ENCODE measurements at regions of chr19 and their contacts with region 1.

Region 1: DNA sequence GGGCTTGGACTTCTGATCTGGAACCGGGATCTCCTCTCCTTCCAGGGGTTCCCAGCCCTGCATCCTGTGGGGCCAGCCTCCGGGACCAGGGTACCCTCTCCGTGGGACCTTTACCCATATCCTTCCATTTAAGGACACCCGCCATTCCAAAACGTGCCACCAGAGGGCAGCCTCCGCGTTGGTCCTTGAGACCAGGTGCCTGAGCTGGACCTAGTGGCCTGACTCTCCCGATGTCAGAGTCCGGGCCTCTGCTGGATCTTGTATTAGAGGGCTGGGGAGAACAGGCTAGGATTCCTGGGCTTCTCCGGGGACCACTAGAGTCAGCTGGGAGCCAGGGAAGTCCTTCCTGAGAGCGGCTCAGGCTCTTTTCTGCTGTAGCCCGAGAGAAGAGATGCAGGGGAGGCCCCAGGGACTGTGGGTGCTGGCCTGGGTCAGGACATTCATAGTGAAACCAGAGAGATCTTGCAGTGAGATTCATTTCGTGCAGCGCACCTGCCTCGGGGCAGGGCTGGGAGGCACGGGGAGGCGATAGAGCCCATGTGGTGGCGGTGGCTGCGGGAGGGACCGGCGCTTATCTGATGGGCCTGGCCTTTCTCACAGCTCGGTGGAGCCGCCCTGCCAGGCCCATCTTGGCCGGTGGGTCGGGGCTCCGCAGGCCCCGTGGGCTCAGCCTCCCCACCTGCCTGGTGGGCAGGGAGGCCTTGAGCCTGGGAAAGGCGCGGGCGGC is 9.8 kb upstream of the SLC7A10 start:
- ATAC-seq: peak; percentile 71 to 92 (median 78)
- H3K4me3 ChIP-seq: no peak overlapping the region
- H3K27ac ChIP-seq: no peak overlapping the region
- H3K4me1 ChIP-seq: no peaks in the 10 kb centered on the region

Region 2: GRCh38 chr19:33406521-33407139 is 171.2 kb after region 1 on chr19:
- in situ Hi-C with region 1: loop called in 8 of 9 experiments (anchors 10 to 25 kb)
- ATAC-seq: peak; percentile 45 to 82 (median 80)
- H3K4me3 ChIP-seq: no peak overlapping the region
- H3K27ac ChIP-seq: no peak overlapping the region
- H3K4me1 ChIP-seq: peaks cover 0 to 3% of the 10 kb centered on the region in 2 donors

Region 3: GRCh38 chr19:33416307-33417215 is 181.1 kb after region 1 on chr19:
- in situ Hi-C with region 1: loop called in 4 of 9 experiments (anchors 10 to 25 kb)
- ATAC-seq: peak; percentile 56 to 94 (median 86)
- H3K4me3 ChIP-seq: no peak overlapping the region
- H3K27ac ChIP-seq: peak overlapping the region; percentile 46 to 74
- H3K4me1 ChIP-seq: peaks cover 22 to 50% of the 10 kb centered on the region in 2 donors

Region 4: DNA sequence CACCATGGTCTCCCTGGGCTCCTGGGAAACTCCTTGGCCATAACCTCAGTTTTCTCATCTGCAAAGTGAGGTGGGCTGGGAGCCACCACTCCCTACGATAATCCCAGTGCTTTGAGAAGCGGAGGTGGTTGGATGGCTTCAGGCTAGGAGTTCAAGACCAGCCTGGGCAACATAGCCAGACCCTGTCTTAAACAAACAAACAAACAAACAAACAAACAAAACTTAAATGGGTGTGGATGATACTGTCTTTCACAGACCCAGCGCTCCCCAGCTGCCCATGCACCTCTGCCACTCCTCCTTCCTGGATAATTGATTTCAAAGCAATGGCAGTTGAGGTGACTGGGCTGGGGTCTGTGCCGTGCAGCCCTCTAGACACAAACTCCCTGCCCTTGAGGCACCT is 345.7 kb after region 1 on chr19:
- in situ Hi-C with region 1: no loop called
- ATAC-seq: no peak
- H3K4me3 ChIP-seq: no peak overlapping the region
- H3K27ac ChIP-seq: no peak overlapping the region
- H3K4me1 ChIP-seq: peaks cover 35 to 47% of the 10 kb centered on the region in 2 donors

Region 5: DNA sequence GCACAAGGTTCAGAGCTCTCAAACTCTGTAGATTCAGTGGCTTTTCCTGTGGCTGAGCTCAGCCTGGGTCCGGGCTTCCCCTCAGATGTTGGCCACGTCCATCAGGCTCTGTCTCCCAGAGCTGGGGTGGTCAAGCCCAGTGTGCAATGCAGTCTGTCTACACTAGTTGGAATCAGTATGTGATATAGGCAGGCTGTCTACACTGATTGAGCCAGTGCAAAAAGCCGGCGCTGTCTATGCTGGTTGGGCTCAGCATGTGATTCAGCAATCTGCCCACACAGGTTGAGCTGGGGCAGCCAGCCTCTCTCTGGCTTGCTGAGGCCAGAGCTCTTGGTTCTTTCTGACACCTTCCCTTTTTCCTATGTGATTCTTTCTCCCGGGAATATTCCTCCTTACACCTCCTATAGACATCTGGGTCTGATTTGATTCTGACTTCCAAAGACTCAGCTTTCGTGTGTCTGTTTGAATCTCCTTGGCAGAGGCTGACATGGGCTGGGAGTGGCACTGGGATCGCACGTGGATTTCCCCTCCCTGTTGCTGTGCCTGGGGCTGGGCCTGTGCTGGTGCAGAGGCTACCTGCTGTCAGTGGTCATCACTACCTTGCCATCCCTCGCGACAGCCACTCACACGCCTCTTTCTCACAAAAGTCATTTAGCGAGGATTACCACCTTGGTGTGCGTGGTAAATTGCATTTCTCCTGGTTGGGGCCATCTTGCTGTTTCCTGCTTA is 395.6 kb after region 1 on chr19:
- in situ Hi-C with region 1: no loop called
- ATAC-seq: peak; percentile 31 to 76 (median 45)
- H3K4me3 ChIP-seq: no peak overlapping the region
- H3K27ac ChIP-seq: no peak overlapping the region
- H3K4me1 ChIP-seq: peaks cover 10% of the 10 kb centered on the region in 2 donors

Region 6: DNA sequence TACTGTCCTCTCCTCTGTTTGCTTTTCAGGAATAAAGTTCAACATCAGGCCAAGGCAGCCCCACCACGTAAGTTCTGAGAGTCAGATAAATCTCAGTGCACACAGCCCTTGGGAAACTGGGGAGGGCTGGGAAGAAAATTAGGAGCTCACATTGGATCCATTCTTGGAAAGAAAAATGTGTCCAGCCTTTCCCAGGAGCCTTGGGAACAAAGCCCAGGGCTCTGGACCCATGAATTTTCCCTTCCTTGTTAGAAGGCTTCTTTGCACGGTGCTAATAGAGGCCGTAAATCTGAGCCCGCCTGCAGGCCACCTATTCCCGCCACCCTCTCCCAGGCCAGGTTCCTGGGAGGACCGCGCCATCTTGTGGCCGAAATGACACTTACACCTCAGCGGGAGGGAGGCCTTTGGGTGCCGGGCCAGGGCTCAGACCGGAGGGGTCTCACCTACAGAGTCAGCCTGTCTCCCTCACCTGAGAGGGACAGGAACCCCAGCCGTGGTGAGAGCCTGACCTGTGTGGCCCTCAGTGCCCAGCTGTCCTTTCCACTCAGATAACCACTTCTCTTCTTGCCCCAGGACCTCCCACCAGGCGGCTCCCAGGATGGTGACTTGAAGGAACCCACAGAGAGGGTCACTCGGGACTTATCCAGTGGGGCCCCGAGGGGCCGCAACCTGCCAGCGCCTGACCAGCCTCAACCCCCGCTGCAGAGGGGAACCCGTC is 536.1 kb after region 1 on chr19:
- in situ Hi-C with region 1: loop called in 2 of 9 experiments (anchors 10 to 25 kb)
- ATAC-seq: peak; percentile 70 to 86 (median 82)
- H3K4me3 ChIP-seq: no peak overlapping the region
- H3K27ac ChIP-seq: peak overlapping the region in 1 of 2 donors; percentile 2
- H3K4me1 ChIP-seq: peaks cover 17 to 23% of the 10 kb centered on the region in 2 donors

Measured in motor neuron (in vitro differentiated cells).